Caki2 (cell line): ENCODE measurements at regions of chr1 and their contacts with region 1.

Region 1: GRCh38 chr1:151243683-151244216 is 10.8 kb upstream of the PSMD4 start:
- DNase-seq: no peak

Region 2: GRCh38 chr1:151098126-151098525 is 145.6 kb before region 1 on chr1:
- in situ Hi-C with region 1: loop called (anchors 10 kb)
- DNase-seq: no peak